Body of pancreas (tissue), 4 donors: ENCODE measurements at regions of chrX and their contacts with region 1.

Region 1: DNA sequence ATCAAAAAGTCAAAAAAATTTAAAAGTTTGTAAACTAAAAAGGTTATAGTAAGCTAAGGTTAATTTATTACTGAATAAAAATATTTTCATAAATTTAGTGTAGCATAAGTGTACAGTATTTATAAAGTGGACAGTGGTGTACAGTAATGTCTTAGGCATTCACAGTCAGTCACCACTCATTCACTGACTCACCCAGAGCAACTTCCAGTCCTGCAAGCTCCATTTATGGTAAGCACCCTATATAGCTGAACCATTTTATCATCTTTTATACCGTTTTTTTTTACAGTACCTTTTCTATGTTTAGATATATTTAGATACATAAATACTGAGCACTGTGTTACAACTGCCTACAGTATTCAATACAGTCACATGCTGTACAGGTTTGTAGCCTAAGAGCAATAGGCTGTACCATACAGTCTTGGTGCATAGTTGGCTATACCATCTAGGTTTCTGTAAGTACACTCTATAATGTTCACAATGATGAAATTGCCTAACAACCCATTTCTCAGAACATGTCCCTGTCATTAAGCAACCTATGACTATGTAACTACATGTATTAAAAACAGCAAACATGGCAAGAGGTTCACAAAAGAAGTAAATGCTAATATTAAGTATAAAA is 18.6 kb downstream of the ACSL4 start:
- DNase-seq: no peak
- ATAC-seq: no peak
- H3K4me3 ChIP-seq: no peak overlapping the region
- H3K27ac ChIP-seq: no peak overlapping the region
- H3K4me1 ChIP-seq: no peaks in the 10 kb centered on the region
- H3K27me3 ChIP-seq: no peaks in the 10 kb centered on the region
- CTCF ChIP-seq: no peak
- POLR2A ChIP-seq: no peak

Region 2: DNA sequence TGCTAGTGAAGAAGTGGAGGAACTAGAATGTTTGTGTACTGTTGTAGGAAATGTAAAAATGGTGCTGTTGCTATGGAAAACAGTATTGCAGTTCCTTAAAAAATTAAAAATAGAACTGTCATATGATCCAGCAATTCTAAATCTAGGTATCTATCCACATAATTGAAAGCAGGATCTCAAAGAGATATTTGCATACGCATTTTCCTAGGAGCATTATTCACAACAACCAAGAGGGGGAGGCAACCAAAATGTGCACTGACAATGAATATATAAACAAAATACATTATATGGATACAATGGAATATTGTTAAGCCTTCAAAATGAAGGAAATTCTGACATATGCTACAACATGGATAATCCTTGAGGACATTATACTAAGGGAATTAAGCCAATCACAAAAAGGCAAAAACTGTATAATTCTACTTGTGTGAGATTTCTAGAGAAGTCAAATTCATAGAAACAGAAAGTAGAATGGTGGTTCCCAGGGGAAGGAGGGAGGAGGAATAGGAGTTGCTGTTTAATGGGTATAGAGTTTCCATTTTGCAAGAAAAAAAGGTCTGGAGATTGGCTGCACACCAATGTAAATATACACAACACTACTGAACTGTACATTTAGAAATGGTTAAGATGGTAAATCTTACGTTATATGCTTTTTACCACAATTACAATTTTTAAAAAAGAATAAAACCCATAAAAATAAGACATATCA is 53.9 kb before region 1 on chrX:
- intact Hi-C with region 1: no loop called
- DNase-seq: no peak
- ATAC-seq: no peak
- H3K4me3 ChIP-seq: no peak overlapping the region
- H3K27ac ChIP-seq: no peak overlapping the region
- H3K4me1 ChIP-seq: no peaks in the 10 kb centered on the region
- H3K27me3 ChIP-seq: no peaks in the 10 kb centered on the region
- CTCF ChIP-seq: no peak
- POLR2A ChIP-seq: no peak

Region 3: GRCh38 chrX:109830704-109831206 is 116.3 kb after region 1 on chrX:
- intact Hi-C with region 1: no loop called
- DNase-seq: peak in 1 of 4 donors; percentile 50
- ATAC-seq: peak; percentile 93
- H3K4me3 ChIP-seq: no peak overlapping the region
- H3K27ac ChIP-seq: peak overlapping the region in 3 of 4 donors; percentile 45 to 70 (median 59)
- H3K4me1 ChIP-seq: peaks cover 9% of the 10 kb centered on the region
- H3K27me3 ChIP-seq: no peaks in the 10 kb centered on the region
- CTCF ChIP-seq: no peak
- POLR2A ChIP-seq: no peak

Region 4: DNA sequence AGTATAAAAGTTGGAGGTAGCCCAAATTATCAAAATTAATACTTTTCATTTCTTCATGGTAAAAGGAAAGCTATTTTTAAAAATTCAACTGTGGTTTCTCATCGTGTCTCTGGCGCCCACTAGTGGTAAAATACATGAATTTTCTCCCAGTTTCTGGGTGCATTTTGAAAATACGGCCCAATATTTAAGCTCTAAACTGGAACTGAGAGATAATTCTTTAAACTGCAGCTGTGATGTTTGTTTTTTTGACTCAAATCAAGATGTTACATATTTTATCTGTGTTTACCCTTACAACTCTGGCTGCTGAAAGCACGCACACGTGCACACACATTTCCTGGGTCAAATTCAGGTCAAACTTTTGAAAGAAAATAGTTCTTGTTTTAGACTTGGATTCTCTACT is 142.5 kb after region 1 on chrX:
- intact Hi-C with region 1: loop called (anchors 10 kb)
- DNase-seq: peak in 1 of 4 donors; percentile 10
- ATAC-seq: peak; percentile 30
- H3K4me3 ChIP-seq: no peak overlapping the region
- H3K27ac ChIP-seq: peak overlapping the region in 1 of 4 donors; percentile 44
- H3K4me1 ChIP-seq: no peaks in the 10 kb centered on the region
- H3K27me3 ChIP-seq: no peaks in the 10 kb centered on the region
- CTCF ChIP-seq: peak; percentile 56 to 74 (median 65)
- POLR2A ChIP-seq: no peak

Region 5: DNA sequence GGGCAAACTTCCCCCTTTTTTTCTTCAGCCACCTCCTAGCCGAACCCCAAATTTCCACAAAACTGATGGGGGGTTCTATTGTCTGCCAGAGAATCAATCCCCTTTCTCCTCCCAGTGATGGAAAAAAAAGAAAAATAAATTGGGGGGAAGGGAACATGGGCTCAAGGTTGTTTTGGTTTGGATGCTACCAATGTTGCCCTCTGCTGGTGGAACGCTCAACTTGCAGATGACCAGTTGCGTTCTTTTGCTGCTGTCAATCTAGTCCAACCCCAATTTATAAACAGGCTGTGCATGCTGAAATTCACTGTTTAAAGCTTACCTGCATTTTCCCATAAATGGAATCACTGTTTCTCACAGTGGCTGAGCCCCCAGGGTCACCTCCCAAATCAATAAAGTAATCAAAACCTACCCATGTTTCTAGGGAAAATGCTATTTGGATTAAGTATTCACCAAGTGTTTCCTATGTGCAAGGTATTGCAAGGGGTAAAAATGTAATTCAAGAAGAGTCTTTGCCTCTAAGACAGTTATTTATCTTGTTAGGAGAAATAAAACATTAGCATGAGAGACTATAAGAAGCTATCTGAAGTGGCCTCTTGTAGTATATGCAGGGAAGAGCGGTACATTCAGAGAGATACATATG is 171.8 kb after region 1 on chrX:
- intact Hi-C with region 1: loop called (anchors 10 kb)
- DNase-seq: peak; percentile 31 to 59 (median 34)
- ATAC-seq: no peak
- H3K4me3 ChIP-seq: no peak overlapping the region
- H3K27ac ChIP-seq: no peak overlapping the region
- H3K4me1 ChIP-seq: no peaks in the 10 kb centered on the region
- H3K27me3 ChIP-seq: no peaks in the 10 kb centered on the region
- CTCF ChIP-seq: peak; percentile 42 to 65 (median 62)
- POLR2A ChIP-seq: no peak